ENCODE measurements at regions of chr19 and their contacts with region 1.

Region 1: GRCh38 chr19:13794757-13795589 is at the start of gene ZSWIM4:
- DNase-seq: peak; percentile 98
- H3K4me3 Mint-ChIP-seq: peak within 1 kb of the TSS; percentile 99
- H3K27ac Mint-ChIP-seq: peak within 1 kb of the TSS; percentile 93
- H3K4me1 Mint-ChIP-seq: peaks cover 35% of the 10 kb centered on the region
- H3K27me3 Mint-ChIP-seq: no peaks in the 10 kb centered on the region
- total RNA-seq, gene ZSWIM4: 10.1 to 10.4 TPM

Region 2: DNA sequence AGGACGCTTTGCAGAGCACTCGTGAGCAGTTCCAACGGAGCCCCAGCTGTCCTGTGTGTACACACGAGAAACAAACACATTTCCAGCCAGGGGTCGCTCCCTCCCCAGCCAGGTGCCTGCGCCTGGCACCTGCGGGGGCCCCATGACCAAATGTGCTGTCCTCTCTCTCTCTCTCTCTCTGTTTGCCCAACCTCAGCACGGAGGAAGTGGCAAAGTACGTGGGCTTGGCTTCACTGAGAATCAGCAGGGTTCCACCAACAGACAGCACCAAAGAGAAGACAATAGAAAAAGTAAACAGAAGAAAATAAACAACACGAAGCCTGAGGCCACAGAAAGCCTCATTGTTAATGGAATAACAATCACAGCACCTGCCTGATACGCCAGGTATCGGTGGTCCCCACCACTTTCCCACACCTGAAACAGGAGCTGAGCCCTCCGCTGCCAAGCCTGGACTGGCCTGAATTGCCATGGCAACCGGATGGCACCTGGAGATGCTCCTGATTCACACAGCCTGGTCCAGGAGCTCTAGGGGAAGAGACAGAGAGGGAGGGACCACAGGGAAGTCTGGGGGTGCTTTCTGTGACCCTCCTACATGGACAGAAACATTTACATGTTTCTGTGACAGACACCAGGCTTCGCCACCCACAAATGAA is 184.8 kb before region 1 on chr19:
- CTCF ChIA-PET with region 1: no interaction called
- POLR2A ChIA-PET with region 1: no interaction called
- DNase-seq: no peak
- H3K4me3 Mint-ChIP-seq: no peak overlapping the region
- H3K27ac Mint-ChIP-seq: no peak overlapping the region
- H3K4me1 Mint-ChIP-seq: peaks cover 4% of the 10 kb centered on the region
- H3K27me3 Mint-ChIP-seq: no peaks in the 10 kb centered on the region

Region 3: GRCh38 chr19:13766095-13766481 is 28.9 kb before region 1 on chr19:
- CTCF ChIA-PET with region 1: no interaction called
- POLR2A ChIA-PET with region 1: no interaction called
- DNase-seq: no peak
- H3K4me3 Mint-ChIP-seq: no peak overlapping the region
- H3K27ac Mint-ChIP-seq: no peak overlapping the region
- H3K4me1 Mint-ChIP-seq: peaks cover 12% of the 10 kb centered on the region
- H3K27me3 Mint-ChIP-seq: no peaks in the 10 kb centered on the region

Region 4: GRCh38 chr19:13833330-13834243 is 38.6 kb after region 1 on chr19:
- CTCF ChIA-PET with region 1: interaction called, 3 read pairs
- POLR2A ChIA-PET with region 1: interaction called, 48 read pairs
- DNase-seq: peak; percentile 94
- H3K4me3 Mint-ChIP-seq: peak overlapping the region; percentile 74
- H3K27ac Mint-ChIP-seq: peak overlapping the region; percentile 70
- H3K4me1 Mint-ChIP-seq: peaks cover 47% of the 10 kb centered on the region
- H3K27me3 Mint-ChIP-seq: no peaks in the 10 kb centered on the region

Region 5: DNA sequence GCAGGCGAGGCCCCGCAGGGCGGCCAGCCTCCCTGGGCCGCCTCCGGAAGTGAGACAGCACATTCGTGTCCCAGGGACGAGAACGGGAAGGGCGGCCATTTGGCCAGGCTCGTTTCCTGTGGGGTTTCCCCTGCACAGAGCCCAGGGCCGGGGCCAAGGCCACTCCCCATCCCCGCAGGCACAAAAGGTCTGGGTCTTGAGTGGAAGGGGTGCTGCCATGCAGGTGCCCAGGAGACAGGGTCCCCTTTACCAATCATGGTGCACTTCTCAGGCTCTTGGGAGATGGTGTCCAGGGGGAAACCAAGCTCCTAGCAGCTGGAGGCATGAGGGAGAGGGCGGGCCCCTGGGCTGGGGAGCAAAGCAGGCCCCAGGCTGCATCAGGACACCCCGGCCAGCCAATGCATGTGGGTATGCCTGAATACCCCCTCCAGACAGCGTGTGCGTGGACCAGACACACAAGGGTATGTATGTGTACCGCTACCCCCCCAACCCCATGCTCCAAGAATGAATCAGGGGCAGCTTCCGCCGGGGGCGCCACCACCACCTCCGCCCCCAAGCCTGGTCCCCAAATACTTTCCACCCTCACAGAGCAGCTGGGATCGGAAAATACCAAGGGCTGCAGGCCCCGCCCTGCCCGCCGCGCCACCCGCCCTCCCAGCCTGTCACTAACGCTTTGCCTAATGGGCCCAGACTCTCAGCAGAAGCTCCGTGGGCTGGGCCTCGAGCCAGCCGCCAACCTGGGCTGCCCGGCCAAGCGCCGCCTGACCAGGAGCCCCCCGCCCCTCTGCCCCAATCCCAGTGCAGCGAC is 44.4 kb after region 1 on chr19:
- CTCF ChIA-PET with region 1: interaction called, 3 read pairs
- POLR2A ChIA-PET with region 1: interaction called, 48 read pairs
- DNase-seq: peak; percentile 89
- H3K4me3 Mint-ChIP-seq: peak overlapping the region; percentile 98
- H3K27ac Mint-ChIP-seq: peak overlapping the region; percentile 87
- H3K4me1 Mint-ChIP-seq: peaks cover 49% of the 10 kb centered on the region
- H3K27me3 Mint-ChIP-seq: no peaks in the 10 kb centered on the region

Region 6: DNA sequence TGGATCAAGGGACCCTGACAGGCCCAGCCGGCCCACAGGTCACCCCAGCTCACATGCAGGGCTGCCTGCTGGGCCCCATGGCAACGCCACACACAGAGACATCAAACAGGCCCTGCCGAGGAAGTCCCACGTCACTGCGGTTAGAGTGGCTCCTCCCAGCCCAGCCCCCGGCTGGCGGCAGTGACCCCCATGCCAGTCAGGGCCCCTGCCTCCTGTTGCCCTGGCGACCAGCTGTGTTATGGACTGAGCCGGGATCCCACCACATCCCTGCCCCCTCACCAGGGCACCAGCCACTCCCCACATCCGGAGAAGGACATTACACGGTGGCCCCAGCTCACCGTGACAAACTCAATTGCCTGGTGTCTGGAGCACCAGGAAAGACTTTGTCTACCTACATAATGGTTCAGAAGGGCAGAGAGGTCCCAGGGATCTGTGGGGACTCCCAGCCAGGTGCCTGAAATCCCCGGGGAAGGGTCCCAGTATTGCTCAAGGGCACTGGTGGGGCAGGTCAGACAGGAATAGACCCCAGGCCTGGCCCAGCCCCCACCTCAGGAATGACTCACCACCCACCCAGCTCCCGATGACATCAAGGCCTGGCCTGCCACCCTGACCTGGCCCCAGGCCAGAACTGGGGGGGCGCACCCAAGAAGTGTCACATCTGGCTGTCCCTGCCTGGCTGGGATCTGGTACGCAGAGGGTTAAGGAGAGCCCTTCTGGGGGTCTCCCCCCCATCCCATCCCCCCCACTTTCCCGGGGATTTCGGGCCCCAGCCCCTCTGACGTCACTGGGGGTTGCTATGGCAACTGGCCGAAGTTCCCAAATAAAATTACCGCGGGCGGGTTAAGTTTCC is 51.8 kb after region 1 on chr19:
- CTCF ChIA-PET with region 1: no interaction called
- POLR2A ChIA-PET with region 1: interaction called, 37 read pairs
- DNase-seq: peak; percentile 96
- H3K4me3 Mint-ChIP-seq: peak overlapping the region; percentile 80
- H3K27ac Mint-ChIP-seq: peak overlapping the region; percentile 99
- H3K4me1 Mint-ChIP-seq: peaks cover 59% of the 10 kb centered on the region
- H3K27me3 Mint-ChIP-seq: no peaks in the 10 kb centered on the region